Ovary (tissue), 10 donors: ENCODE measurements at regions of chr5 and their contacts with region 1.

Region 1: DNA sequence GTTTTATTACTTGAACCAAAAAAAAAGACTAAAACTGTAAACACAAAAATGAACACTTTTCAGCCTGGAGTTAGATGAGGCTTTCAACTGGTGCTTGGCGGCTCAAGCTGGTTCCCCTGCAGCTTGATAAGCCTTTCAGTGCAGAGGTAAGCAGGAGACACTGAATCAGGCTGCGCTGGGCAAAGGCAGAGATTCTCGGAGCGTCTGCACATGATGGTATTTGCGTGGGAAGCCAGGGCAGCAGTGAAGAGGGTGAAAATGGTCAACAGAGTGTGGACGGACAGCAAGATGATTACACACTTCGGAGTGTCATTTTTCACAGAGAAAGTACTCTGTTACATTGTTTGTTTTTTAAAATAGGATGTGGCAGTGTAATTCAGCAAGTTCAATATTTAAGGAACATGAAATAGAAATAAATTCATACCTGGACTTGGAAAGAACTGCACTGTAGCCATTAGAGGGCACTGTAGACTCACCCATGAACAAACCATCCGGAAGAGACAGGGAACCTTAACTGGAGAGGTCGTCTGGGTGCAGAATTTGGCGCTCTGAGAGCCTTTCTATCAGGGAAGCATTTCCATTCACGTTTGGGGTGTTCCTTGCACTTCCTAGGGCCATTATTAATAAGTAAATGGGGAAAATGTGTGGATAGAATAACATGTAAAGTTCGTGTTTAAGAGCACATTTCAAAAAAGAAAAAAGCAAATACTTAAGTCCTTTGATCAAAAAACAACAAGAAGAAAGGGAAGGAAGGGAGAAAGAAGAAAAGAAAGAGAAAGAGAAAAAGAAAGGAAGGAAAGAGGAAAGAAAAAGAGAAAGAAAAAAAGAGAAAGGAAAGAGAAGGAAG is 69.8 kb downstream of the ICE1 start:
- DNase-seq: no peak
- H3K4me3 ChIP-seq: no peak overlapping the region
- H3K27ac ChIP-seq: no peak overlapping the region
- H3K4me1 ChIP-seq: peaks cover 2% of the 10 kb centered on the region
- H3K27me3 ChIP-seq: no peaks in the 10 kb centered on the region
- CTCF ChIP-seq: peak in 2 of 3 donors; percentile 22 to 26
- EP300 ChIP-seq: no peak
- POLR2A ChIP-seq: no peak

Region 2: GRCh38 chr5:5178136-5178535 is 314.2 kb before region 1 on chr5:
- intact Hi-C with region 1: no loop called
- DNase-seq: no peak
- H3K4me3 ChIP-seq: no peak overlapping the region
- H3K27ac ChIP-seq: peak overlapping the region in 1 of 2 donors; percentile 11
- H3K4me1 ChIP-seq: peaks cover 18% of the 10 kb centered on the region
- H3K27me3 ChIP-seq: no peaks in the 10 kb centered on the region
- CTCF ChIP-seq: no peak
- EP300 ChIP-seq: no peak
- POLR2A ChIP-seq: no peak

Region 3: GRCh38 chr5:5886812-5887486 is 394.6 kb after region 1 on chr5:
- intact Hi-C with region 1: loop called in 1 of 4 experiments (anchors 10 kb)
- DNase-seq: no peak
- H3K4me3 ChIP-seq: no peak overlapping the region
- H3K27ac ChIP-seq: no peak overlapping the region
- H3K4me1 ChIP-seq: no peaks in the 10 kb centered on the region
- H3K27me3 ChIP-seq: no peaks in the 10 kb centered on the region
- CTCF ChIP-seq: no peak
- EP300 ChIP-seq: no peak
- POLR2A ChIP-seq: no peak

Region 4: DNA sequence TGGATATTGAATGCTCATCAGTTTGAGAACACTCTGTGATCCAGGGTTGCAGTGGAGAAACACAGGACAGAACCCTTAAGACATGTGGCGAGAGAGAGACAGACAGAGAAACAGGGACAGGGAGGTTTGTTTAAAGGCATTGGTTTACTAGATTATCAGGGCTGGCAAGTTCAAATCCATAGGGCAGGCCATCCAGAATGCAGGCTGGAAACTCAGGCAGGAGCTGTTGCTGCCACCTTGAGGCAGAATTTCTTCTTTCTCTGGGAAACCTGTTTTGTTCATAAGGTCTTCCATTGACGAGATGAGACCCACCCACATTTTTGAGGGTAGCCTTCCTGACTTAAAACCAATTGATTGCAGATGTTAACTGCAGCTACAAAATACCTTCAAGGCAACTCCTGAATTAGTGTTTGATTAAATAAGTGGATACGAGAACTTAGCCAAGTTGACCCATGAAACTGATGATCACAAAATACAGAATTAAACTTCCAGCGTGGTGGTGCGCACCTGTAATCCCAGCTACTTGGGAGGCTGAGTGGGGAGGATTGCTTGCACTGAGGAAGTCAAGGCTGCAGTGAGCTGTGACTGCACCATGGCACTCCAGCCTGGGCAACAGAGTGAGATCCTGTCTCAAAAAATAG is 1084.7 kb after region 1 on chr5:
- intact Hi-C with region 1: loop called in 2 of 4 experiments (anchors 10 kb)
- DNase-seq: no peak
- H3K4me3 ChIP-seq: no peak overlapping the region
- H3K27ac ChIP-seq: no peak overlapping the region
- H3K4me1 ChIP-seq: peaks cover 2% of the 10 kb centered on the region
- H3K27me3 ChIP-seq: no peaks in the 10 kb centered on the region
- CTCF ChIP-seq: peak in 1 of 3 donors; percentile 39
- EP300 ChIP-seq: no peak
- POLR2A ChIP-seq: no peak

Region 5: DNA sequence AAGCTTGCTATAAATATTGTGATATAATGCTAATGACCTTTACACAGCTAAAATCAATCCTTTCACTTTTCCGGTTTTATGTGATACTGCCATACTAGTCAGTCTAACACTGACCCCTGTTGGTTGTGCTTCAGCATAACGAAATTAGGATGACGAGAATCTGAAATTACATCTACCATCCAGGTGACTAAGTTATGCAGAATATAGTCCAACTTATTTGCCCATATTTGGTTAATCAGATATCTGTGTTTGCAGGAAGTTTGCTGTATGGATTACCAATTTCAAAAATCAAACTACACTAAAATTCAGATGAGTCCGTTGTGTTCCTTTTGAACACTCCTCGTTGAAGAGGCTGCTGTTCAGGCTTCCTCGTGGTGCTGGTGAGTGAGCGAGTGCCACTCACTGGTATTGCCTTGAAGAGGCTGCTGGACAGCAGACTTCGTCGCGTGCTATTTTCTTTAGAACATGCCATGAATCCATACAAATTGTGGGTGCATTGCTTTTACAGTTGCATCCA is 1253.5 kb after region 1 on chr5:
- intact Hi-C with region 1: loop called in 1 of 4 experiments (anchors 10 kb)
- DNase-seq: peak in 1 of 5 donors; percentile 16
- H3K4me3 ChIP-seq: no peak overlapping the region
- H3K27ac ChIP-seq: no peak overlapping the region
- H3K4me1 ChIP-seq: peaks cover 4% of the 10 kb centered on the region
- H3K27me3 ChIP-seq: no peaks in the 10 kb centered on the region
- CTCF ChIP-seq: peak; percentile 44 to 60 (median 49)
- EP300 ChIP-seq: no peak
- POLR2A ChIP-seq: no peak